Activated T-helper 2 cell treated with anti-CD3 and anti-CD28 coated beads, Interferon-gamma antibody, Interleukin-2, Interleukin-4, amounts not matched to agents 10 μg/mL and 5 μg/mL and 100 μg/mL, durations not matched to agents 14 hours and 24 hours and 36 hours (primary cell): ENCODE measurements at regions of chr1 and their contacts with region 1.

Region 1: DNA sequence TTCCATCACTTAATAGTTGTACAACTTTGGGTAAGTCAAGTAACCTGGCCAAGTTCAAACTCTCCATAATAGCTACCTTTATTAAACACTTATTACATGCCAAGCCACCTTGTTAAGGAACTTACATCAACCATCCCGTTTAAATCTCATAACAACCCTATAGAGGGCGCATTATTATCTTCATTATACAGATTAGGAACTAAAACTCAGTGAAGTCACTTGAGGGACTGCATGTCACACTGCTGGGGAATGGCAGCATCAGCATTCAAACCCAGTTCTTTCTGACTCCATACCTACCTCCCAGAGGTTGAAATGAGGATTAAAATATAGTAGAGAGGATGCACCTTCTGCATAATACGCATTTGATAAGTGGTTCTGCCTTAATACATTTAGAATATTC is 47.1 kb upstream of the PLA2G2C start:
- DNase-seq: no peak
- H3K4me3 Mint-ChIP-seq: no peak overlapping the region
- H3K27ac Mint-ChIP-seq: no peak overlapping the region
- H3K4me1 Mint-ChIP-seq: no peaks in the 10 kb centered on the region
- H3K27me3 Mint-ChIP-seq: peaks cover 49% of the 10 kb centered on the region

Region 2: GRCh38 chr1:20212685-20213331 is 20.6 kb before region 1 on chr1:
- intact Hi-C with region 1: no loop called
- DNase-seq: peak; percentile 22
- H3K4me3 Mint-ChIP-seq: no peak overlapping the region
- H3K27ac Mint-ChIP-seq: no peak overlapping the region
- H3K4me1 Mint-ChIP-seq: peaks cover 15% of the 10 kb centered on the region
- H3K27me3 Mint-ChIP-seq: peaks cover 41% of the 10 kb centered on the region

Region 3: DNA sequence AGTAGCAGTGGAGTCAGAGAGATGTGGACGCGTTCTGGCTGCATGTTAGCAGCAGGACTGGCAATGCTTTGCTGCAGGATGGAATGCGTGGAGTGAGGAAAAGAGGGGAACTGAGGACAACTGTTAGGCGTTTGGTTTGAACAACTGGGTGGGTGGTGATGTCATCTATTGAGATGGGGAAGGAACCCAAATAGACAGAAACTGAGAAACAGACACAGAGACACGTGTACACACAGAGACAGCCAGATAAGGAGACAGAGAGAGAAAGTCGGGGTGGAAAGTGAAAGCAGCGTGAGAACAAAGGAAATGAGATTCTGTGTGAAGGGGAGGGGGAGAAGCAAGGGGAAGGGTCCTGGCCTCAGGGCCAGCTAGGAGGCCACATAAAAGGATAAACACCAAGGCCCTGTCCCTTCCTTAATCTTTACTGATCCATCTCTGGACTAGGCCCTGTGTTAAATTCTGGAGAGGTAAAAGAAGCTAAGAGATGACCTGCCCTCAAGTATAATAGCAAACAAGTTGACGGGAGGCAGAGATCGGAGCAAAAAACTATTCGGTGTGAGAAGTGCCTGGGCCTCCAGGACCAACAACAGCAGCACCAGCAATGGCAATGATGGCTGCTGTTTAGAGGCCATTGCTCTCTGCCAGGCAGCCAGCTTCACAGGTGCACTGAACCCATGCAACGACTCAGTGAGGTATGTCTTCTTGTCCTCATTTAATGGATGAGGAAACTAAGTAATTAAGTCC is 88.9 kb after region 1 on chr1:
- intact Hi-C with region 1: no loop called
- DNase-seq: peak; percentile 15
- H3K4me3 Mint-ChIP-seq: peak overlapping the region; percentile 13
- H3K27ac Mint-ChIP-seq: peak overlapping the region; percentile 26
- H3K4me1 Mint-ChIP-seq: peaks cover 27% of the 10 kb centered on the region
- H3K27me3 Mint-ChIP-seq: peaks cover 41% of the 10 kb centered on the region

Region 4: GRCh38 chr1:20430355-20431175 is 197.2 kb after region 1 on chr1:
- intact Hi-C with region 1: loop called (anchors 2 kb)
- DNase-seq: no peak
- H3K4me3 Mint-ChIP-seq: no peak overlapping the region
- H3K27ac Mint-ChIP-seq: no peak overlapping the region
- H3K4me1 Mint-ChIP-seq: peaks cover 11% of the 10 kb centered on the region
- H3K27me3 Mint-ChIP-seq: peaks cover 21% of the 10 kb centered on the region